Mammary epithelial cell (primary cell): ENCODE measurements at regions of chr14 and their contacts with region 1.

Region 1: GRCh38 chr14:87805315-87805723 is 187.7 kb downstream of the GALC start:
- DNase-seq: peak; percentile 46
- H3K4me3 ChIP-seq: no peak overlapping the region
- H3K27ac ChIP-seq: no peak overlapping the region
- H3K4me1 ChIP-seq: peaks cover 7% of the 10 kb centered on the region
- H3K27me3 ChIP-seq: no peaks in the 10 kb centered on the region
- CTCF ChIP-seq: peak; percentile 90 to 97

Region 2: GRCh38 chr14:87508333-87508732 is 297.0 kb before region 1 on chr14:
- CTCF ChIA-PET with region 1: no interaction called
- dilution Hi-C with region 1: no loop called
- in situ Hi-C with region 1: no loop called
- intact Hi-C with region 1: no loop called
- DNase-seq: peak; percentile 83
- H3K4me3 ChIP-seq: no peak overlapping the region
- H3K27ac ChIP-seq: no peak overlapping the region
- H3K4me1 ChIP-seq: no peaks in the 10 kb centered on the region
- H3K27me3 ChIP-seq: no peaks in the 10 kb centered on the region
- CTCF ChIP-seq: no peak

Region 3: DNA sequence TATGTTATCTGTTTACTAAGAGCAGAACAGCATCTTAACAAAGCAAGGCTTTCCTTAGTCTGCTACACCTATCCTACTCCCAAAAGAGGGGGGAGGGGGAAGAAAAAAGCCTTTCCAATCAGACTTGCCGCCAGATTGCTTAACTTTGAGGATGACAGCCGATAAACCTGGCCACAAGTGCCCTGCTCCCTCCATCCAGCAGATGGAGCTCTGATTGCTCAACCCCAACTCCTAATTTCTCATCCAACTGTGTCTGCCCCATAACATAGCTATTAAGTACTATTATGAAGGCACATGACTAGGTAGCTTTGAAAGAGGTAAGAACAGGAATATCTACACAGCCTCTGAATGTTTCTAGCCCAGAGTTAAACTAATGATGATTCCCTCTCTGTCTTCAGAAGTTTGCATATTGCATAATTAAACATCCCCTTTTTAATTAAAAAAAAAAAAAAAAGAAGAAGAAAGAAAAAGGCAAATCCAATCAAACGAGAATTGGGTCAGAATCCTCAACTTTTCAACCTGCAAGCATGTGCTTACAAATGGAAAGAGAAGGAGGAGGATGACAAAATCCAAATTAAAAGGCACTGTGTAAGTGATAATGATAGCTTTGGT is 59.7 kb before region 1 on chr14:
- CTCF ChIA-PET with region 1: no interaction called
- dilution Hi-C with region 1: no loop called
- in situ Hi-C with region 1: no loop called
- intact Hi-C with region 1: loop called (anchors 1 kb)
- DNase-seq: peak; percentile 41
- H3K4me3 ChIP-seq: no peak overlapping the region
- H3K27ac ChIP-seq: no peak overlapping the region
- H3K4me1 ChIP-seq: no peaks in the 10 kb centered on the region
- H3K27me3 ChIP-seq: no peaks in the 10 kb centered on the region
- CTCF ChIP-seq: peak; percentile 88 to 92

Region 4: DNA sequence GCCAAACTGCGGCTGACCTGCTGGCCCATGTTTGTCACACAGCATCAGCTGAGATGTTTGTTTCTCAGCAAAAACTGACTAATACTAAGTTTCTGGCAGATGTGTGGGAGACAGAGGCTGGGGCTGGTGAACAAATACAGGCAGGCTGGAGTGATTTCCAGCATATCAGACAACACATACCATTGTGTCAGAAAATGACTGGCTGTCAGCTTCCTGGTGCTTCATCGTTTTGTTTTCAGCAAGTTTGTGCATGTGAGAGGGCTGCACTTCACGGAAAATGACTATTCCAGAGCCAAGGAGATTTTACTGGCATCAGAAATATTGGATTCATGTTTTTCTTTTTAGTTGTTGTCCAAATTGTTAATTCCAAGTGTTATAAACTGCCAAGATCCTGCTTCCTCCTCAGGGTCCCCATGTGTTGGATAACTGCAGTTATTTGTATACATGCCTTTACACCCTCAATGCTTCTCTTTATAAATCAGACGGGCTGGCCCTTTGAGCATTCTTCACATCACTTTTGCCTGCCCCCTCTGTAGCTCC is 42.0 kb after region 1 on chr14:
- CTCF ChIA-PET with region 1: no interaction called
- dilution Hi-C with region 1: no loop called
- in situ Hi-C with region 1: no loop called
- intact Hi-C with region 1: loop called (anchors 5 kb)
- DNase-seq: peak; percentile 70
- H3K4me3 ChIP-seq: no peak overlapping the region
- H3K27ac ChIP-seq: no peak overlapping the region
- H3K4me1 ChIP-seq: peaks cover 15% of the 10 kb centered on the region
- H3K27me3 ChIP-seq: no peaks in the 10 kb centered on the region
- CTCF ChIP-seq: no peak

Region 5: DNA sequence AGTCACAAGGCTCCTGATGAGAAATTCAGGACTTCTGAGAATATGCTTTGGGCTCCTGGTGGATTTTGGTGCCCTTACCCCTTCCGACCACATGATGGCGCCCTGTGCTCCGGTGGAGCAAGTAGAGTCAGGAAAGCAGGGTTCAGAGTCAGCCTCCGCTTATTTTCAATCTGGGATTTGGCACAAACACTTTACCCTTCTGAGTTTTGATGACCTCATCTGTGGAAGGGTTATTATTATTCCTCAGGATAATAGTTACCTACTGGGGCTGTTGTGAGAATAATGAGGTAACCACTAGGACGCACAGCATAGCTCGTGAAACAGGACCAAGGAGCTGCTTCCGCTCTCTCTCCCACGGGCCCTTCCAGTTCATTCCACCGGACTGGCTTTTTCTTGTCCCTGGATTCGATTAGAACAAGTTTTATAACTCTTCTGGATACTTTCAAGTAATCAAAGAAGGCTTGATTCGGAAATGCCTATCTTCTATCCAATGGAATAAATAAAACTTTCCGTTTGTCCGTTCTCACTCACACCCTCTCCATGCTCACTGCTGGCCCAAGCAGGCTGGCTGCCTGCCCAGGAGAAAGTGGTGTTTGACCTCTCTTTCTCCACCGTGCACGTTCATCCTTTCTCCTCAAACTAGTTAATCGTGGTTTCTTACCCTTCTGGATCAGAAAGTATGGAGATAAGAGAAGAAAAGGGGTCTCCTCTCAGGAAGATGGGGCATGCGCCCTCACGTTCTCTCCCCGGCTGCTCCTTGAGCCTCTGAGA is 83.1 kb after region 1 on chr14:
- CTCF ChIA-PET with region 1: no interaction called
- dilution Hi-C with region 1: no loop called
- in situ Hi-C with region 1: loop called (anchors 5 to 10 kb)
- intact Hi-C with region 1: loop called (anchors 1 kb)
- DNase-seq: no peak
- H3K4me3 ChIP-seq: no peak overlapping the region
- H3K27ac ChIP-seq: no peak overlapping the region
- H3K4me1 ChIP-seq: no peaks in the 10 kb centered on the region
- H3K27me3 ChIP-seq: no peaks in the 10 kb centered on the region
- CTCF ChIP-seq: peak; percentile 65 to 69

Region 6: GRCh38 chr14:87896393-87897380 is 91.4 kb after region 1 on chr14:
- CTCF ChIA-PET with region 1: interaction called, 9 read pairs
- dilution Hi-C with region 1: no loop called
- in situ Hi-C with region 1: loop called (anchors 5 to 10 kb)
- intact Hi-C with region 1: loop called (anchors 1 kb)
- DNase-seq: peak; percentile 37
- H3K4me3 ChIP-seq: no peak overlapping the region
- H3K27ac ChIP-seq: no peak overlapping the region
- H3K4me1 ChIP-seq: no peaks in the 10 kb centered on the region
- H3K27me3 ChIP-seq: no peaks in the 10 kb centered on the region
- CTCF ChIP-seq: peak; percentile 68 to 69

Region 7: DNA sequence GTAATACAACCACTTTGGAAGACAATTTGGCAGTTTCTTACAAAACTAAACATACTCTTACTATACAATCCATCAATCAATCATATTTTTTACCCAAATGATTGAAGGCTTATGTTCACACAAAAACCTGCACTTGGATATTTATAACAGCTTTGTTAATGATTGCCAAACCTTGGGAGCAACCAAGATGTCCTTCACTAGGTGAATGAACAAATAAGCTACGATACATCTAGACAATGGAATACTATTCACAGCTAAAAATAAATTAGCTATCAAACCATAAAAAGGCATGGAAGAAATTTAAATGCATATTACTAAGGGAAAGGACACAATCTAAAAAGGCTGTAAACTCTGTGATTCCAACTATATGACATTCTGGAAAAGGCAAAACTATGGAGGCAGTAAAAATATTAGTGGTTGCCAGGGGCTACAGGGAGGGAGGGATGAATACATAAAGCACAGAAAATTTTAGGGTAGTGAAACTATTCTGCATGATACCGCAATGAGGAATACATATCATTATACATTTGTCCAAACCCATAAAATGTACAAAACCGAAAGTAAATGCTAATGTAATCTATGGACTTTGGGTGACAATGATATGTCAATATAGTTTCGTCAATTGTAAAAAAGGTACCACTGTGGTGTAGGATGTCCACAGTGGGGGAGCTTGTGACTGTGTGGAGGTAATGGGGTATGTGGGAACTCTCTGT is 270.1 kb after region 1 on chr14:
- CTCF ChIA-PET with region 1: no interaction called
- dilution Hi-C with region 1: no loop called
- in situ Hi-C with region 1: no loop called
- intact Hi-C with region 1: no loop called
- DNase-seq: no peak
- H3K4me3 ChIP-seq: no peak overlapping the region
- H3K27ac ChIP-seq: no peak overlapping the region
- H3K4me1 ChIP-seq: no peaks in the 10 kb centered on the region
- H3K27me3 ChIP-seq: no peaks in the 10 kb centered on the region
- CTCF ChIP-seq: no peak